ENCODE measurements at regions of chr6 and their contacts with region 1.

Region 1: DNA sequence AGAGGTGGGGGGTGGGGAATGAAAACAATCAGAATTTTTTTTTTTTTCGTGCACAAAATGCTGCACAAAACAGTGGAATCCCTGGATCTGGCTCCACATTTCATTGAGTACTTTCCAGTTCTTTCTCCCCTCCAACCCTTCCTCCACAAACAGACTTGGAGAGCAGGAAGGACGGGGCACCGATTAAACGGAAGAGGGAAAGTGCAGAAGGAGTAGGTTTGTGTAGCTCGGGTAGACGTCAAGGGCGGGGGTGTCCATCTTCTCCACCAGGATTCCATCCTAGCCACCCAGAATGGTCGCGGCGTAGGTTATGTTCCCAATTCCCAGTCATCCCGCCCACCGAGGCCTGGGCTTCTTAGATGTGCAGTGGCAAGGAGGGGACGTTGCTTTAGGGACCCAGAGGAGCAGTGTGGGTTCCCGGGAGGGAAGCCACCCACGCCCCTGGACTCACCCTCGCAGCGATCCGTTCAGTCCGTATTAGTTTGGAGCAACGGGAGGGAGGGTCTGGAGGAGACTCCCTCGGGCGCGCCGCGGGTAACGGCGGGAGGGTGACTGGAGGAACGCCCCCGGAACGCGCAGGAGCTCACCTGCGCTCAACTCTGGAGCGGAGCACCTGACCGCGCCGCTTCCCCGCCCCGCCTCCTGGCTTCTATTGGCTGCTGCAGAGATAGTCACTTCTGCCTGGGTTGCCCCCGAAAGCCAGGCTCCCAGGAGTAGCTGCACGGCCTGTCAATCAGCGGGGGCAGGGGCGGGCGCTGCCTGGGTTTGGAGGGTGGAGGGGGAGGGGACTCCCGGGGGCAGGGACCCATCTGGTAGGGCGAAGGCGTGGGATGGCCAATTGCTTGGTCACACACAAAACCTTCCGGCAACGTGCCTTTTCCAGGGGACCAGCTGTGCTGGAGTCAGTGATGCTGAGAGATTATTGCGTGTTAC is at the start of gene ENPP5:
- DNase-seq: peak; percentile 88 to 98 (median 96)

Region 2: GRCh38 chr6:46129629-46130511 is 40.8 kb before region 1 on chr6 and contains the start of gene ENPP4:
- intact Hi-C with region 1: loop called (anchors 2 kb)
- DNase-seq: peak; percentile 79 to 97 (median 91)

Measured in head of caudate nucleus (tissue), 42 donors.